ENCODE measurements at regions of chr22 and their contacts with region 1.

Region 1: DNA sequence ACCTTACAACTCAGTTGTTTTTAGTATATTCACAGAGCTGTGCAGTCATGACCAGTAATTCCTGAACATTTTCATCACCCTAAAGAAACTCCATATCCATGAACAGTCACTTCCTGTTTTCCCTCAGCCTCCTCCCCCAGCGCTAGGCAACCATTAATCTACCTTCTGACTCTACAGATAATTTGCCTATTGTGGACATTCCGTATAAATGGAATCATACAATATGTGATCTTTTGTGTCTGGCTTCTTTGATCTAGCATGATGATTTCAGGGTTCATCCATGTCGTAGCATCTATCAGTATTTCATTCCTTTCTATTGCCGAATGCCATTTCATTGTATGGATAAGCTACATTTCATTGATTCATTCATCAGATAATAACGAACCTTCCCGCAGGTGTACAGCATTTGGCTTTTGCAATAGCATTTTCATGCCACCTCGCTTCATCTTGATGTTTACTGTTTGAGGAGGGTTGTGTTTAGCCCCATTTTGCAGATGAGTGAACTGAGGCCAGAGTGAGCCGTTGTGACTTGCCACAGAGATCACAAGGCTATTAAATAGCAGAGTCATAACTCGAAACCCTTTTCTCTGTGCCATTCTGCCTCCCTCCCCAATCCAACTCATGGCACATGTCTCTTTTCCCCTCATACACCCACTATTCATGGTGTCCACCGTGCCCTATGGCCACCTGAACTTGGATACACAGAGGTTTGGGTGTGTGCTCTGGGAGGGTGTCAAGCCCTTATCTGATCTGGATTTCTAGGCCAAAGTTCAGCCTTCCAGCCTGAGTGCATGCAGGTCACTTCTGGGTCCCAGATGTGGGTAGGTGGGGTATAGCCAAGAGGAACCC is 11.1 kb upstream of the MYH9 start:
- DNase-seq: no peak
- ATAC-seq: no peak
- H3K4me3 ChIP-seq: no peak overlapping the region
- H3K27ac ChIP-seq: no peak overlapping the region
- H3K4me1 ChIP-seq: peaks cover 0 to 34% (median 3%) of the 10 kb centered on the region in 12 donors
- H3K27me3 ChIP-seq: no peaks in the 10 kb centered on the region
- CTCF ChIP-seq: no peak
- POLR2A ChIP-seq: no peak

Region 2: DNA sequence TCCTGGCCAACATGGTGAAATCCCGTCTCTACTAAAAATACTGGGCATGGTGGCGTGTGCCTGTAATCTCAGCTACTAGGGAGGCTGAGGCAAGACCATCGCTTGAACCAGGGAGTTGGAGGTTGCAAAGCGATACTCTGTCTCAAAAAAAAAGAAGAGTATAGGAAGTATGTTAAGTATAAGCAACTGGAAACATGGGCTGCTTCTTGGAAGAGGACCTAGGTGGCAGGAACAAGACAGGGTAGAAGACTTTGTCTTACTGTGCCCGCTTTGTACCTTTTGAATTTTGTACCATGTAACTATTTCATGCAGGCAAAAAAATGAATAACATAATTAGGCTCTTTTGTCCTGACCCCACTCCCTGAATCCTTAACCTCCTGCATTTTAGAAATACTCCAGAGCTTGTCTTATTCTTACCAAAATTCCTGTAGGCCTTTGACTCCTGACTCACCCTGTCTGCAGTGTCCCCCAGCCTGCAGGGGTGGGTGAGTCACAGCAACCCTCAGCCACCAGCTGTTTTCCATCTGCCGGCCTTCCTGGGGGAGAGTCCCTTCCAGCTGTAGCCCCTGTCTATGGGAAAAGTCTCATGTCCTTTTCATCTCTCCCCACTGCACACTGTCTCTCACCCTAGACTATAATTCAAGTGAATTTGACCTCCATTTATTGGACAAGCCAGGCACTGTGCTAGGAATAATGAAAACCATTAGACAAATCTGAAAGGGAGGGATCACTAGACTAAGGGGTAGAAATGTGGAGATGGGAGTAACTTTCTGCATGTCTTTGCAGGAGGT is 40.8 kb after region 1 on chr22:
- intact Hi-C with region 1: loop called in 2 of 10 experiments (anchors 5 to 10 kb)
- DNase-seq: peak; percentile 65 to 88 (median 84)
- ATAC-seq: peak; percentile 66 to 98 (median 90)
- H3K4me3 ChIP-seq: no peak overlapping the region
- H3K27ac ChIP-seq: peak overlapping the region in 8 of 12 donors; percentile 24 to 69 (median 44)
- H3K4me1 ChIP-seq: peaks cover 0 to 48% (median 0%) of the 10 kb centered on the region in 12 donors
- H3K27me3 ChIP-seq: no peaks in the 10 kb centered on the region
- CTCF ChIP-seq: no peak
- POLR2A ChIP-seq: no peak